Posterior vena cava (tissue), 2 donors: ENCODE measurements at regions of chrX and their contacts with region 1.

Region 1: GRCh38 chrX:42900947-42901346 is 123.0 kb upstream of the PPP1R2C start:
- DNase-seq: no peak

Region 2: GRCh38 chrX:42704454-42705090 is 196.4 kb before region 1 on chrX:
- intact Hi-C with region 1: loop called in 1 of 2 experiments (anchors 5 kb)
- DNase-seq: no peak